Activated CD8-positive, alpha-beta T cell treated with anti-CD3 and anti-CD28 coated beads, Interleukin-2, amount 10 ng/mL, durations not matched to agents 7 days and 5 days (primary cell): ENCODE measurements at regions of chr4 and their contacts with region 1.

Region 1: DNA sequence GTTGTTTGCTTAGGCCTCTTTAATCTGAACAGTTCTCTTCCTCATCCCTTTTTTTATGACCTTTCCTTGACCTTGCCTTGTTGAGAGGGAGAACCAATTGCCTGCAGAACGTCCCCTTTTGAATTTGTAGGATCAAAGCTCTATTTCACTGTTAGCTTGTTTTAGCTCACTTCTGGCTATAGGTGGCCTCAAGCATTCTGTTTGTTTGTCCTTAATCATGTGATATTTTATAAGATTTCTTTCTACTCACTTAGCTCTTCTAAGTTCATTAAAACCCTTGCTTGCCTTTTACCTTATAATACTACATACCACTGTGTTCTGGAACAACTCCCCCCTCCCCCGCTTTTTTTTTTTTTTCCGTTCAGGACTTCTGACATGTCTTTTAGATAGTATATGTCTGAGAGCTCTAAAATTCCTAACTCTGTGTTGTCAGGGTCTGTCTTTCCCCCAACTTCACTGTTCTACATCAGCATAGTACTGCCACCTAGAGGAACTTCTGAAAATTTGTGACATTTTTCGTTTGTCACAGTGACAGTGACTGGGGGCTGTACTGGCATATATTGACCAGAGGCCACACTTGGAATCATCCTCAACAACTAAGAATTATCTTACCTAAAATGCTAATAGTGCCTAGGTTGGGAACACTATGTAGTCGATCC is 128.5 kb downstream of the LARP7 start:
- DNase-seq: no peak
- ATAC-seq: peak; percentile 44
- H3K4me3 Mint-ChIP-seq: no peak overlapping the region
- H3K27ac Mint-ChIP-seq: no peak overlapping the region
- H3K4me1 Mint-ChIP-seq: peaks cover 2% of the 10 kb centered on the region
- H3K27me3 Mint-ChIP-seq: no peaks in the 10 kb centered on the region

Region 2: DNA sequence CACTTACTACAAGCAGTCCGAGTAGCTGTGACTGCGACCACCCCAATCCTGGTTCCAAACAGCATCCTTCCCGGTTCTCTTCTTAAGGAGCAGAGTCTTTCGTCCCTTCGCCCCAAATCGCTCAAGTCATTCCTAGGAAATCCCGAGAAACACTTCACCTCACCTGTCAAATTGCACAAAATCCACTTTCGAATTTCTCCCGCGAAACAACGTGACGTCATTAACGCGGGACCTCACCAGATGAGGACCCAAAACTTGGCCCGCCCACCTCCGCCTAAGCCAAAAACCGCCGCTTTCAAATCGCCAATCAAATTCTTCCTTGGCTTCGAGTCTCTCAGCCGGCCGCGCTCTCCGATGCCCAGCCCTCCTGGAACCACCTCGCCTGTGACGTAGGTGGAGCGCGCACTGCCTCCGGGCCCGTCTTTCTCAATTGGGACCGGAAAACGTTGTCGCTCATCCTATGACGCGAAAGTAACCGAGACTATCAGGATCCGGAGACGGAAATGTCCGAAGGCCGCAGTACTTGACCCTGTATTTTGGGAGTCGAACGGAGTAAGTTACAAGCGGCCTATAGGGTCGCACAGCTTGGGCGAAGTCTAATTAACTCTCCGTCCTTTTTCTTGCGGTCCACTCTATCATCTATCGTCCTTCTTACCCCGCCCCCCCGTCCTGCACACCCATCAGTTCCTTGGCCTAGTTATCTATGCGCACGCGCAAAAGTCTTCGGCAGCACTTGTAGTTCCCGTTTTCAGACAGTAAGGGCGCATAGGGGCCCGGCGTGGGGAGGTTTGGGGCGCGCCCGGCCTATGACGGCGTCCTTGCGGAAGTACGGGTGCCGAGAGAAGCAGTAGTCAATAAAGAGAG is 128.5 kb before region 1 on chr4 and contains the starts of genes LARP7 and ZGRF1:
- CTCF ChIA-PET with region 1: interaction called, 13 read pairs
- POLR2A ChIA-PET with region 1: no interaction called
- DNase-seq: peak; percentile 99
- ATAC-seq: peak; percentile 94
- H3K4me3 Mint-ChIP-seq: no peak within 1 kb of the TSS
- H3K27ac Mint-ChIP-seq: peak within 1 kb of the TSS; percentile 79
- H3K4me1 Mint-ChIP-seq: peaks cover 31% of the 10 kb centered on the region
- H3K27me3 Mint-ChIP-seq: no peaks in the 10 kb centered on the region
- total RNA-seq, gene LARP7: 48.2 to 51.3 TPM
- total RNA-seq, gene ZGRF1: 47.0 to 48.3 TPM

Region 3: DNA sequence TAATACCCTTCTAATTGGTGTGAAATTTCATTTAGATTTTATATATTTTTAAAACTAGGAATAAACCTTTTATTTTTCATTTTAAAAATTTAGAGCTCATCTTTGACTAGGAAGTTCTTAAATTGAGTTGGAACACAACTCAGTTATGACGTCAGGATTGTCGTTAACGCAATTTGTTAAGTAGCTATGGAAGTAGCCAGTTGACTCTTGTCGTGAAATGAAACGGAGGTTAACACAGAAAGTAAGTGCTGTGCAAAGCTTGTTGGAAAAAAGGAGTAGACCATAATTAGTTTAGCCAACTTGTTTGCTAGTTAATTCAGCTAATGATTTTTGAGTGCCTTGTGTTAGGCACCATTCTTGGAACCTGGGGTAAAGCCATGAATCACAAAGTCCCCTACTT is 110.2 kb before region 1 on chr4:
- CTCF ChIA-PET with region 1: interaction called, 13 read pairs
- POLR2A ChIA-PET with region 1: interaction called, 3 read pairs
- DNase-seq: no peak
- ATAC-seq: no peak
- H3K4me3 Mint-ChIP-seq: no peak overlapping the region
- H3K27ac Mint-ChIP-seq: no peak overlapping the region
- H3K4me1 Mint-ChIP-seq: no peaks in the 10 kb centered on the region
- H3K27me3 Mint-ChIP-seq: no peaks in the 10 kb centered on the region

Region 4: GRCh38 chr4:112938461-112939058 is 173.1 kb after region 1 on chr4:
- CTCF ChIA-PET with region 1: interaction called, 16 read pairs
- POLR2A ChIA-PET with region 1: no interaction called
- DNase-seq: no peak
- ATAC-seq: no peak
- H3K4me3 Mint-ChIP-seq: no peak overlapping the region
- H3K27ac Mint-ChIP-seq: no peak overlapping the region
- H3K4me1 Mint-ChIP-seq: no peaks in the 10 kb centered on the region
- H3K27me3 Mint-ChIP-seq: peaks cover 4% of the 10 kb centered on the region